ENCODE measurements at regions of chr5 and their contacts with region 1.

Region 1: DNA sequence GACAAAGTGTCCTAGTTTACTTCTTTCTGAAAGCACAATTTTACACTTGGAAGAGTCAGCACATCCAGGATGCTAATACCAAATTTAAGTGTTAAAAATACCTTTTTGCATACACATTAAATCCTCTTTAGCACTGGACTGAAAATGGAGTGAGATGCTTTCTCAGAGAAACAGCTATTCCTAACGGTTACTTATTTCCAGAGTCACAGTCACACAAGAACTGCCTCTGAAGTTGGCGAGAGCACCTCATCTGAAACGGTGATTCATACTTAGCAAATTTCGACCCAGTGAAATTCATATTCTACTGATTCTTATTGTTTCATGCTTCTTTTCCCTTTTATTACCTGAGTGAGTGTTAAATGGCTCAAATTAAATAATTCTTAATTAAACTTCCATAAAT is 12.2 kb downstream of the CDH18 start:
- DNase-seq: no peak
- ATAC-seq: no peak
- H3K4me3 ChIP-seq: no peak overlapping the region
- H3K27ac ChIP-seq: peak overlapping the region; percentile 60; the same call in 1 of the 2 replicates
- H3K4me1 ChIP-seq: no peaks in the 10 kb centered on the region; the same call in 1 of the 2 replicates
- H3K27me3 ChIP-seq: no peaks in the 10 kb centered on the region
- CTCF ChIP-seq: no peak

Region 2: DNA sequence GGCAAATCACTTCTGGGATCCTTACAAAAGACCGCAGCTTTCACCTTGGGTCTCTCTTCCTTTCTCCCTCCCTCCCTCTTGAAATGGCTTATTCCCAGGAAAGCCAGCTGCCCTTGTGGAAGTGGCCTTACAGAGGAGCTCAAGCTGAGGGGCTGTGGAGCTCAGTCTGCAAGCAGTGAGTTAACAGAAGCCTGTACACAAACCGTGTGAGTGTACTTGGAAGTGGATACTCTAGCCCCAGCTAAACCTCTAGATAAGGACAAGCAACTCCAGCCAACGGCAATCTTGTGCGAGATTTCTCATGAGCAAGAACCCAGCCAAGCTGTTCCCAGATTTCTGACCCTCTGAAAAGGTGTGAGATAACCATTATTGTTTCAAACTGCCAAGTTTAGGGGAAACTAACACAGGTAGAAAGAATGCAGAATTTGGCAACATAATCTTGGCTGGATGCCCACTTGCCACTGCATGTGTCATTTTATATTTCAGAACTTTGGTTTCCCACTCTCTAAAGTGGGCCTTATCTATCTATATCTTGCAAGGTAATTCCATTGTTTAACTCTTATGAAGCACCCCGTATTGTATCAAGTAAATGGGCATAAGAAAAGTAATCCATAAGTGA is 73.4 kb before region 1 on chr5:
- CTCF ChIA-PET with region 1: no interaction called
- POLR2A ChIA-PET with region 1: no interaction called
- in situ Hi-C with region 1: no loop called
- intact Hi-C with region 1: no loop called
- DNase-seq: no peak
- ATAC-seq: peak; percentile 71
- H3K4me3 ChIP-seq: no peak overlapping the region
- H3K27ac ChIP-seq: peak overlapping the region; percentile 48
- H3K4me1 ChIP-seq: no peaks in the 10 kb centered on the region; the same call in 1 of the 2 replicates
- H3K27me3 ChIP-seq: no peaks in the 10 kb centered on the region
- CTCF ChIP-seq: no peak

Region 3: GRCh38 chr5:19950897-19951296 is 24.9 kb before region 1 on chr5:
- CTCF ChIA-PET with region 1: no interaction called
- POLR2A ChIA-PET with region 1: interaction called, 13 read pairs
- in situ Hi-C with region 1: no loop called
- intact Hi-C with region 1: no loop called
- DNase-seq: no peak
- ATAC-seq: no peak
- H3K4me3 ChIP-seq: no peak overlapping the region
- H3K27ac ChIP-seq: no peak overlapping the region
- H3K4me1 ChIP-seq: no peaks in the 10 kb centered on the region
- H3K27me3 ChIP-seq: no peaks in the 10 kb centered on the region
- CTCF ChIP-seq: no peak